ENCODE measurements at regions of chrX and their contacts with region 1.

Region 1: DNA sequence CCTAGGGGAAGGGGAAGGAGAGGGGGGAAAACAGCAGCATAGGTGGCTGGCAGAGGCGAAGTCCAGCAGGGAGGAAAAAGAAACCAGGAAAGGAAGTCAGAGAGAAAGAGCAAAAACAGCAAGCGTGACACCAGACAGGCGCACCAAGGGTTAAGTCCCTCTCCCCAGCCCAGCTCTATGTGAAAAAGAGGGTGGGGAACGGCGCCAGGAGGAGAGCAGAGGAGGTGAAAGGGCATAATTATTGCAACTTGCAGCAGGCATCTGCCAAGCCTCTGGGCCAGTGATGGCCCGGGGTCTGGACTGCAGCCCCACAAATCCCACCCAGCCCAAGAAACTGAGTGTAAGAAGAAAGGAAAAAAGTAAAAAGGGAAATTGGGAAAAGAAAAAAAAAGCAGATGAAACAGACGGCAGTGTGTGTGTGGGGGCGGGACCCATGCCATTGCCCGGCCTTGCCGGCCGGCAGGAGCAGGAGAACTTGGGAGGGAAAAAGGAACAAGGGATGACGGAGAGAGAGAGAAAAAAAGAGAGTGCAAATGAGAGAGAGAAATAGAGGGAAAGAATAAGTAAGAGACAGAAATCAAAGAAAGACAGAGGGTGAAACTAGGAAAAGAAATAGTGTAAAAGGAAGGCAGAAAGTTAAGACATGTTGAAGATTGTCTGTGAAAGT is 14.1 kb upstream of the RHOXF2 start:
- DNase-seq: no peak
- CTCF ChIP-seq: no peak

Region 2: GRCh38 chrX:119791438-119792231 is 352.7 kb before region 1 on chrX and contains the start of gene RPL39:
- in situ Hi-C with region 1: loop called (anchors 25 kb)
- DNase-seq: peak; percentile 82
- CTCF ChIP-seq: no peak

Region 3: GRCh38 chrX:119981286-119982070 is 162.8 kb before region 1 on chrX:
- in situ Hi-C with region 1: loop called (anchors 25 kb)
- DNase-seq: peak; percentile 38
- CTCF ChIP-seq: peak; percentile 44